ENCODE measurements at regions of chr4 and their contacts with region 1.

Region 1: GRCh38 chr4:140103676-140104075 is 50.3 kb downstream of the MAML3 start:
- DNase-seq: peak; percentile 81
- H3K4me3 Mint-ChIP-seq: no peak overlapping the region
- H3K27ac Mint-ChIP-seq: peak overlapping the region; percentile 73
- H3K4me1 Mint-ChIP-seq: peaks cover 49% of the 10 kb centered on the region
- H3K27me3 Mint-ChIP-seq: no peaks in the 10 kb centered on the region

Region 2: GRCh38 chr4:138851391-138852335 is 1252.0 kb before region 1 on chr4:
- CTCF ChIA-PET with region 1: no interaction called
- POLR2A ChIA-PET with region 1: no interaction called
- intact Hi-C with region 1: no loop called
- DNase-seq: no peak
- H3K4me3 Mint-ChIP-seq: no peak overlapping the region
- H3K27ac Mint-ChIP-seq: no peak overlapping the region
- H3K4me1 Mint-ChIP-seq: peaks cover 3% of the 10 kb centered on the region
- H3K27me3 Mint-ChIP-seq: peaks cover 1% of the 10 kb centered on the region

Region 3: DNA sequence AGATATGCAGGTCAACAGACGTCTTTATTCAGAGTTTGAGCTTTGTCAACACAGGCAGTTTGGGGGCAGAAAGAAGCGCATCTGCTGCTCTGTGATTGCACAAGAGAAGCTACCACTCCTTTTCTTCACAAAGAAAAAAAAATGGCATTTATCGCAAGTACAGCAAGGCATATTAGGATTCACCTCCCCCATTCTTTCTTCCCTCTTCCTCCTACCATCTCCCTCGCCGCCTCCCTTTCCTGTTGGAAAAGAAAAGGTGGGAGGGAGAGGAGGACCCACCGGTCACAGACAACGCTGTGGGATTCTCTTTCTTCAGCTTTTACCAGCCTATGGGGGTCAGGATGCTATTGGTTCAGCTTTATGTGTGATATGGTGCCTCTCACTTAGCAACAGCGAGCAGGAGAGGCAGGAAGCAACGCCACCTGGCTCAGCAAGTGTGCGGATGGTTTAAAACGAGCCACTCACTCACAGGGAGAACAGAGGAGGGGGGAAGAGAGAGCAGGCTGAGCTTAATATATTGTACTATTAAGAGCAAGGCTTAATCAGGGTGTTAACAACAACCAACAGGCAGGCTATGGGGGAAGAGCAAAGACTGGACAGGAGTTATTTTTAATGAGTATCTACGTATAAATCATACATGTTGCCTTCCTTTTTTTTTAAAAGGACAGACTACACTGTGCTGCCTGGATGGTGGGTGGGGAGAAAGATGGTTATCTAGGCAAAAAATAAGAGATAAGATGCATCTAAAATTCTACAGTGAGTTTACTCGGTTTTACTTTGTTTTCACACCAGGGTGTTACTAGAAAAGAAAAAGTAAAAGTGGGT is 54.4 kb before region 1 on chr4:
- CTCF ChIA-PET with region 1: interaction called, 3 read pairs
- POLR2A ChIA-PET with region 1: no interaction called
- intact Hi-C with region 1: loop called (anchors 10 kb)
- DNase-seq: peak; percentile 62
- H3K4me3 Mint-ChIP-seq: peak overlapping the region; percentile 57
- H3K27ac Mint-ChIP-seq: no peak overlapping the region
- H3K4me1 Mint-ChIP-seq: peaks cover 24% of the 10 kb centered on the region
- H3K27me3 Mint-ChIP-seq: peaks cover 32% of the 10 kb centered on the region

Region 4: GRCh38 chr4:140116442-140117104 is 12.9 kb after region 1 on chr4:
- CTCF ChIA-PET with region 1: no interaction called
- POLR2A ChIA-PET with region 1: no interaction called
- intact Hi-C with region 1: loop called (anchors 1 kb)
- DNase-seq: peak; percentile 49
- H3K4me3 Mint-ChIP-seq: no peak overlapping the region
- H3K27ac Mint-ChIP-seq: peak overlapping the region; percentile 14
- H3K4me1 Mint-ChIP-seq: peaks cover 17% of the 10 kb centered on the region
- H3K27me3 Mint-ChIP-seq: peaks cover 7% of the 10 kb centered on the region

Region 5: DNA sequence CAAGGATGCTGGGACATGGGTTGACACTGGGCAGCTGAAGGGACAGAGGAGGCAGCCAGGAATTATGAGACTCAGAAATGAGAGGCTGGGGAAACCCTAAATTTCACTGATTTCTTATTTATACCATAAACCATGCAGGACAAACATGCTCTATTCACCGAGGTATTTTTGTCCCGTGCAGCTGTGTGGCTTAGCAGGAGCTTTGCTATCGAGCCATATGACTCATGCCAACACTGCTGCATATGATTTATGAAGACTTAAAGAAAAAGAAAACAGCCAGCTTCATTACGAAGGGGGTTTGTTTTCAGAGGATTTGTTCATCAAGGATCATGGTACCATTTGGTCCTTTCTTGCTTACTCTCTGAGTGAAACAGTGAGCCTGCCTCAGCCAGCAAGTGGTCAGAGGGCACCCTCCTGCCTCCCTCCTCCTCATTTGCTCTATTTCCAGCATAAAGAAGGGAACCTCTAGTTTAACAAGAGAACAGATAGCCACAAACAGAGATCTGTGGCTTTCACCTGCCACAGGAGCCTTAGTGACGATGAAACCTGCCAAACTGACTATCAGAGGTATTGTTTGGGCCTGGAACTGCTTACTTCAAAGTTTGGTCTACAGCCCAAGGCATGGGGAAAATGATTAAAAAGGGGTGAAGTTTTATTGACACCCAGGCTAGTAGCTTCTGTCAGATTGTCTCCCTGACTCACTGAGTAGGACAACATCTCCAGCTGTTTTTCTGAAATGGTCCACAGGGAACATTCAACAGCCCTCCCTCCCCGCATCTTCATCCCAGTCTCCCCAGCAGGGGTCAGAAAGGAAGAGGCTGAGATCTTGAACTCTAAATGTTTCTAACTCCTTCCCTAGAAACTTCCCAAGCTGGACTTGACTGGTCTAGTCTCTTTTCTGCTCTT is 130.4 kb after region 1 on chr4:
- CTCF ChIA-PET with region 1: no interaction called
- POLR2A ChIA-PET with region 1: no interaction called
- intact Hi-C with region 1: no loop called
- DNase-seq: no peak
- H3K4me3 Mint-ChIP-seq: peak overlapping the region; percentile 21
- H3K27ac Mint-ChIP-seq: peak overlapping the region; percentile 78
- H3K4me1 Mint-ChIP-seq: peaks cover 12% of the 10 kb centered on the region
- H3K27me3 Mint-ChIP-seq: peaks cover 9% of the 10 kb centered on the region